HepG2 (cell line): ENCODE measurements at regions of chr22 and their contacts with region 1.

Region 1: GRCh38 chr22:19479357-19480172 is at the start of gene CDC45:
- DNase-seq: peak; percentile 97
- ATAC-seq: peak; percentile 94
- H3K4me3 ChIP-seq: peak within 1 kb of the TSS; percentile 71 to 98 (median 97)
- H3K27ac ChIP-seq: peak within 1 kb of the TSS; percentile 97
- H3K4me1 ChIP-seq: peaks cover 26% of the 10 kb centered on the region
- H3K27me3 ChIP-seq: no peaks in the 10 kb centered on the region; a peak in 1 of 5 replicates
- CTCF ChIP-seq: no peak
- EP300 ChIP-seq: 0 out of 4 replicates have a peak, but pooled peaks of 1 of the 2 experiments have one; percentile 8
- POLR2A ChIP-seq: peak; percentile 39 to 42; a peak in 2 of 4 replicates
- RAD21 ChIP-seq: no peak
- total RNA-seq, gene CDC45: 34.8 and 36.3 TPM in 2 replicates

Region 2: GRCh38 chr22:19291580-19292457 is 187.7 kb before region 1 on chr22 and contains the start of gene CLTCL1:
- CTCF ChIA-PET with region 1: no interaction called
- POLR2A ChIA-PET with region 1: no interaction called
- in situ Hi-C with region 1: loop called (anchors 10 kb)
- intact Hi-C with region 1: no loop called
- DNase-seq: peak; percentile 46
- ATAC-seq: peak; percentile 67
- H3K4me3 ChIP-seq: peak within 1 kb of the TSS; percentile 76 to 95 (median 86)
- H3K27ac ChIP-seq: peak within 1 kb of the TSS; percentile 66
- H3K4me1 ChIP-seq: peaks cover 35% of the 10 kb centered on the region
- H3K27me3 ChIP-seq: no peaks in the 10 kb centered on the region; a peak in 1 of 5 replicates
- CTCF ChIP-seq: peak; percentile 7; the same call in 1 of the 2 replicates
- EP300 ChIP-seq: no peak
- POLR2A ChIP-seq: peak; percentile 50 to 74
- RAD21 ChIP-seq: peak; percentile 29; the same call in 1 of the 2 replicates
- total RNA-seq, gene CLTCL1: 7.1 and 8.1 TPM in 2 replicates

Region 3: DNA sequence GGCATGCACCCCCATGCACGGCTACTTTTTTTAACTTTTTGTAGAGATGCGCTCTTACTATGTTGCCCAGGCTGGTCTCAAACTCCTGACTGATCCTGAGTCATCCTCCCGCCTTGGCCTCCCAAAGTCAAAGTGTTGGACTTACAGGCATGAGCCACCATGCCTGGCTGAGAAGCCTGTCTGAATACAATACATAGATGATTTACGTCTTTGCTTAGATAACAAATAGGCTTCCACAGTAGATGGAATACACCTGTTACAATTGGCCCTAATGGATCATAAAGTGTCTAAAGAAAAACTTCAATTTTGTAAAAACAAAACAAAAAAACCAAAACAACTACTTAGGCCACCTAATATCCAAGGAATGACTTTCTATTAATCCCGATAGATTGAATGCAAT is 175.0 kb before region 1 on chr22:
- CTCF ChIA-PET with region 1: no interaction called
- POLR2A ChIA-PET with region 1: no interaction called
- in situ Hi-C with region 1: loop called (anchors 10 kb)
- intact Hi-C with region 1: loop called (anchors 10 kb)
- DNase-seq: no peak
- ATAC-seq: no peak
- H3K4me3 ChIP-seq: no peak overlapping the region
- H3K27ac ChIP-seq: no peak overlapping the region
- H3K4me1 ChIP-seq: no peaks in the 10 kb centered on the region
- H3K27me3 ChIP-seq: no peaks in the 10 kb centered on the region; a peak in 1 of 5 replicates
- CTCF ChIP-seq: no peak
- EP300 ChIP-seq: no peak
- POLR2A ChIP-seq: no peak
- RAD21 ChIP-seq: no peak

Region 4: DNA sequence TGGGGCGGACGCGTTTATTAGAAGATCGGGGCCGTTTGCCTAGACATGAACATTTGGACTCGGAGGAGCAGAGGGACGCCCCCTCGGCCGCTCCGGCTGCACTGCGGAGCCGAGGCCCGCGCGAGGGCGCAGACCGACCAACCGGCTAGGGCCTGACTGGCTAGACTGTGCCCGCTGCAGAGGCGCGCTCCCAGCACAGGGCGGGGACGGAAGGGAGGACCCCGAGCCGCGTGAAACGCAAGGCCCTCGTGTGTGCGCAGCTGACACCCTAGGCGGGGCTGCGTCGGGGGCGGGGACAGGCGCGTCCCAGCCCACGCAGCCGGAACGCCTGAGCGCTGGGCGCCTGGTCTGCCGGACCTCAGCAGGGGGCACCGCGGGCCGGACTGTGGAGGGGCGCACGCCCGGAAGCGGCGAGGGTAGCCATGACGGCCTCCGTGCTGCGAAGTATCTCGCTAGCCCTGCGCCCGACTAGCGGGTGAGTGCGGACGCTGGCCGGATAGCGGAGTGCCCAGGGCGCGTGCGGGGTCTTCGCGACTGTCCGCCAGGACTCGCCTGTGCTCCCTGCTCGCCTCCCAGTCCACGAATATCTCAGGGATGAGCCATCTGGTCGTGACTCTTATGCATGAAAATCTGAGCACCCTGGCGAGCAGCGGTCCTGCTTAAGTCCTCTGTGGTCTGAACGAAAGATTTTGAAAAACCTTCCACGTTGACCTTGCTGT is 47.3 kb before region 1 on chr22 and contains the start of gene MRPL40:
- CTCF ChIA-PET with region 1: no interaction called
- POLR2A ChIA-PET with region 1: interaction called, 12 read pairs
- in situ Hi-C with region 1: no loop called
- intact Hi-C with region 1: loop called (anchors 2 kb)
- DNase-seq: peak; percentile 86
- ATAC-seq: peak; percentile 92
- H3K4me3 ChIP-seq: peak within 1 kb of the TSS; percentile 86 to 91 (median 88)
- H3K27ac ChIP-seq: peak within 1 kb of the TSS; percentile 97
- H3K4me1 ChIP-seq: peaks cover 38% of the 10 kb centered on the region
- H3K27me3 ChIP-seq: no peaks in the 10 kb centered on the region; a peak in 1 of 5 replicates
- CTCF ChIP-seq: peak; percentile 49
- EP300 ChIP-seq: peak; percentile 39 to 62; a peak in 1 of 4 replicates
- POLR2A ChIP-seq: peak; percentile 93 to 96
- RAD21 ChIP-seq: peak; percentile 69
- total RNA-seq, gene MRPL40: 79.7 and 107 TPM in 2 replicates

Region 5: GRCh38 chr22:19447388-19448075 is 32.0 kb before region 1 on chr22 and contains the start of gene C22orf39:
- CTCF ChIA-PET with region 1: no interaction called
- POLR2A ChIA-PET with region 1: interaction called, 4 read pairs
- in situ Hi-C with region 1: no loop called
- intact Hi-C with region 1: loop called (anchors 2 kb)
- DNase-seq: peak; percentile 93
- ATAC-seq: peak; percentile 90
- H3K4me3 ChIP-seq: peak within 1 kb of the TSS; percentile 70 to 86 (median 81)
- H3K27ac ChIP-seq: peak within 1 kb of the TSS; percentile 84
- H3K4me1 ChIP-seq: peaks cover 40% of the 10 kb centered on the region
- H3K27me3 ChIP-seq: no peaks in the 10 kb centered on the region; a peak in 1 of 5 replicates
- CTCF ChIP-seq: no peak
- EP300 ChIP-seq: no peak
- POLR2A ChIP-seq: peak; percentile 55 to 87; a peak in 3 of 4 replicates
- RAD21 ChIP-seq: peak; percentile 55; the same call in 1 of the 2 replicates
- total RNA-seq, gene C22orf39: 26.4 and 31.5 TPM in 2 replicates

Region 6: DNA sequence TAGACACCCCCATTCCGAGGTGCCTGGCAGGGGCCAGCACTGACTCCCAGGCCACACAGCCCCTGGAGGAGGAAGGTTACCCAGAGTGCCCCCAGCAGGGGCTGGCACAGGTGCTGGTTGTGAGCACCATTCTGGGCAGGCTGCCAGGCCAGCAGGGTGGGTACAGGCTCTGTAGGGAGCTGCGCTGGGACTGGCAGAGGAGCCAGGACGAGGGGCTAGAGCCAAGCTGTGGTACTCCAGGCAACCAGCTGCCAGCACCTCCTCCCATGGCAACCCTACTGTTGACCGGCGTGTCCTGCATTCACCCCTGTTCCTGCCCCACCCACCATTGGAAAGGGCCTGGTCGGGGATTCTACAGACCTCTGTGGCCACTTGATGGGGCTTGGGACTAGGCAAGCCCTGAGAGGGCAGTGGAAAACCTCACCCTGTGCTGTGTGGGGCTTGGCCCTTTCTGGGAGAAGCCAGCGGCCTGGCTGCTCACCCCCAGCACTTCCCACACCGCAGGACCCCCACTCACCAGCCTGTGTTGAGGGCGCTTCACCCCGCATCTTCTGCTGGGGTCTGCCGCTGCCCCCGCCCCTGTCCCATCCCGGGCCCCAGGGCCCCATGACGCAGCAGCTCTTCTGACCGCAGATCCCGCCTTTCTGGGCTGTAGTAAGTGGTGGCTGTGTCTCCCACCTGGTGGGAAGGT is 42.8 kb after region 1 on chr22:
- CTCF ChIA-PET with region 1: no interaction called
- POLR2A ChIA-PET with region 1: no interaction called
- in situ Hi-C with region 1: no loop called
- intact Hi-C with region 1: no loop called
- DNase-seq: no peak
- ATAC-seq: no peak
- H3K4me3 ChIP-seq: no peak overlapping the region
- H3K27ac ChIP-seq: no peak overlapping the region
- H3K4me1 ChIP-seq: no peaks in the 10 kb centered on the region
- H3K27me3 ChIP-seq: 0 out of 5 replicates have a peak, but pooled peaks cover 0 to 5% of the 10 kb centered on the region in 2 experiments
- CTCF ChIP-seq: no peak
- EP300 ChIP-seq: no peak
- POLR2A ChIP-seq: no peak
- RAD21 ChIP-seq: no peak

Region 7: GRCh38 chr22:19543970-19544708 is 64.6 kb after region 1 on chr22:
- CTCF ChIA-PET with region 1: no interaction called
- POLR2A ChIA-PET with region 1: no interaction called
- in situ Hi-C with region 1: loop called (anchors 10 kb)
- intact Hi-C with region 1: no loop called
- DNase-seq: peak; percentile 28
- ATAC-seq: peak; percentile 89
- H3K4me3 ChIP-seq: peak overlapping the region in 1 of 3 experiments; percentile 31; a peak in 1 of 6 replicates
- H3K27ac ChIP-seq: no peak overlapping the region
- H3K4me1 ChIP-seq: peaks cover 24% of the 10 kb centered on the region
- H3K27me3 ChIP-seq: peaks cover 0 to 18% of the 10 kb centered on the region in 2 experiments; a peak in 2 of 5 replicates
- CTCF ChIP-seq: peak; percentile 31
- EP300 ChIP-seq: no peak
- POLR2A ChIP-seq: no peak
- RAD21 ChIP-seq: no peak

Region 8: GRCh38 chr22:19568337-19569275 is 89.0 kb after region 1 on chr22:
- CTCF ChIA-PET with region 1: no interaction called
- POLR2A ChIA-PET with region 1: no interaction called
- in situ Hi-C with region 1: no loop called
- intact Hi-C with region 1: no loop called
- DNase-seq: no peak
- ATAC-seq: no peak
- H3K4me3 ChIP-seq: no peak overlapping the region
- H3K27ac ChIP-seq: no peak overlapping the region
- H3K4me1 ChIP-seq: no peaks in the 10 kb centered on the region
- H3K27me3 ChIP-seq: peaks cover 3 to 30% of the 10 kb centered on the region in 2 experiments; a peak in 4 of 5 replicates
- CTCF ChIP-seq: no peak
- EP300 ChIP-seq: no peak
- POLR2A ChIP-seq: no peak
- RAD21 ChIP-seq: no peak

Region 9: GRCh38 chr22:19629720-19630419 is 150.3 kb after region 1 on chr22:
- CTCF ChIA-PET with region 1: no interaction called
- POLR2A ChIA-PET with region 1: no interaction called
- in situ Hi-C with region 1: loop called (anchors 5 kb)
- intact Hi-C with region 1: loop called (anchors 10 kb)
- DNase-seq: peak; percentile 65
- ATAC-seq: peak; percentile 86
- H3K4me3 ChIP-seq: no peak overlapping the region
- H3K27ac ChIP-seq: no peak overlapping the region
- H3K4me1 ChIP-seq: peaks cover 12% of the 10 kb centered on the region; the same call in 1 of the 2 replicates
- H3K27me3 ChIP-seq: peaks cover 5 to 29% of the 10 kb centered on the region in 2 experiments; a peak in 4 of 5 replicates
- CTCF ChIP-seq: peak; percentile 97
- EP300 ChIP-seq: no peak
- POLR2A ChIP-seq: no peak
- RAD21 ChIP-seq: peak; percentile 91